Mammary epithelial cell (primary cell): ENCODE measurements at regions of chr11 and their contacts with region 1.

Region 1: DNA sequence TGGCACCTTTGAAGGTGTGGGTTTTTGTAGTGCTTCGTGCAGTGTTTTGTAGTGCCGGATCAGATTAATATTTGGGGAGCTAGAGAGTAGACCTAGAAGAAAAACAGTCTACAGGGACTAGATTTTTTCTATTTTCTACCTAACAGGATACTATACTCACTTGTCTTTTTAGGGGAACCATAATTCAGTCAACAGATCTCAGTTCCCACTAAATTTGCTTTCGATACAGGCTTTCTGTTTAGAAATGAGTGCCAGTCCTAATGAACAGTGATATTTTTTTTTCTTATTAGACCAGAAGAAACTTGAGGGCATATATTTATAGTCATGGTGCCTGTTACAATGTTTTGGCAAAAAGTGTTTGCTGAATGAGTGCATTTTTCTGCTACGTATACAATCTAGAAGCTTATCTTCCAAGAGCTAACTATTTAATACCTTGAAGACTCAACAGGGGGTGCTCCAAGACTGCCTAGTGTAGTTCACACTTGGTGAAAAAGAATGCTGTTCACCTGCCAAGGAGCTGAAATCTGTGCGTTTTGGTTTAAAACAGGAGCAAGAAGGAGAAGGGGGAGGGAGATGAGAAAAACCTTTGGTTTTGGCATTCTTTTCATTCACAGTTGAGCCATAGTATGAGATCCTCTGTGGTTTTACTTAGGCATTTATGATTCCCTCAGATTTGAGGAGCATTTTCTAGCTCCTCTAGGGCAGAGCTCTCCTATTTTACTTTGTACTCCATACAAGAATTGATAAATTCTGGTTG is 44.9 kb upstream of the VSTM5 start:
- DNase-seq: peak; percentile 48
- H3K4me3 ChIP-seq: peak overlapping the region in 1 of 3 experiments; percentile 4
- H3K27ac ChIP-seq: no peak overlapping the region
- H3K4me1 ChIP-seq: no peaks in the 10 kb centered on the region
- H3K27me3 ChIP-seq: no peaks in the 10 kb centered on the region
- CTCF ChIP-seq: peak; percentile 88 to 89

Region 2: DNA sequence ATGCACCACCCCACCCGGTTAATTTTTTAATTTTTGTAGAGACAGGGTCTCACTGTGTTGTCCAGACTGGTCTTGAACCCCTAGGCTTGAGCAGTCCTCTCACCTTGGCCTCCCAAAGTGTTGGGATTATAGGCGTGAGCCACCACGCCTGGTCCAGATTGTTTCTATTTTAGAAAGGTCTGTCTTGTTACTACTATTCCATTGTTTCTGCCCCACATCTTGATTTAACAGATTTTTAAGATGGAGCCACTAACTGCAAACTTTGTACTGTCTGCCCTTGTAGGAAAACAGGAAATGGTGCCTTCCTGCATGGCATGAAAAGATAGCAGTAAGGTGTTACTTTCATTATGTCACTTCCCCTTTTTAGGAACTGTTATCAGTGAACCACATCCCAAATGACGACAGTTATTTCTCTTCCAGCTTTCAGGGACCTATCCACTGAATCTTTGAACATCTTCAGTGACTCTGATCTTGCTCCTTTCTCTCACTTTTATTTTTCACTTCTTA is 177.2 kb before region 1 on chr11:
- CTCF ChIA-PET with region 1: no interaction called
- dilution Hi-C with region 1: no loop called
- in situ Hi-C with region 1: no loop called
- intact Hi-C with region 1: no loop called
- DNase-seq: no peak
- H3K4me3 ChIP-seq: no peak overlapping the region
- H3K27ac ChIP-seq: no peak overlapping the region
- H3K4me1 ChIP-seq: no peaks in the 10 kb centered on the region
- H3K27me3 ChIP-seq: no peaks in the 10 kb centered on the region
- CTCF ChIP-seq: no peak

Region 3: DNA sequence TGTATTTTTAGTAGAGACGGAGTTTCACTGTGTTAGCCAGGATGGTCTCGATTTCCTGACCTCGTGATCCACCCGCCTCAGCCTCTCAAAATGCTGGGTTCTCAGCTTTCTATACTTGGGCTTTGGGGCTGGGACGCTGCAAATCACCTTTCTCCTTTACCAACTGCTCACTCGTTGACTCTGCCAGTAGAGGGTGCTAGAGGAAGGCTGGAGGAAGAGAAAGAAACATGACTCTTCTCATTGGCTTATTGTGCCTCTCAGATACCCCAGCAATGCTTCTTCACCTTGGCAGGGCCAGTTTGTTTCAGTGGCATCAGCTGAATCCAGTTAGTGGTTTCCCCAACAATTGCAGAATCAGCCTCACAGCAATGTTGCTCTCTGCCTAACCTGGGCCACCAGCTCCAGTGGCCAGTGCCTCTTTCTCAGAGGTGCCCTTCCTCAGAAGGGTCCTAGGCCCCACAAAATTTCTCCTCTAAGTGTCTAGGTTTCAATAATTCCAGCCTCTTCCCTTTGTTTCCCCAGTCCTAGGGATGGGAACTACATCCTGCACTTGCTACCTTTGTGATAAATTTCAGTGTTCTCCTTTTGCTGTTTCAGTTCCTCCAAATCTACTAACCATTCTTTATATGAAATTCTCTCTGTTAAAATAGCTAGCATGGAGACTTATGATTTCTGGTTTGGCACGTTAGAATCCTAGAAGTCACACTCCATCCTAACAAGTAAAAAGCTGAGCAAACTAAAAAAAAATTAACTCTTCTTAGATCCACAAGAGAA is 26.6 kb after region 1 on chr11:
- CTCF ChIA-PET with region 1: interaction called, 8 read pairs
- dilution Hi-C with region 1: no loop called
- in situ Hi-C with region 1: no loop called
- intact Hi-C with region 1: loop called (anchors 1 kb)
- DNase-seq: peak; percentile 68
- H3K4me3 ChIP-seq: no peak overlapping the region
- H3K27ac ChIP-seq: no peak overlapping the region
- H3K4me1 ChIP-seq: peaks cover 7% of the 10 kb centered on the region
- H3K27me3 ChIP-seq: no peaks in the 10 kb centered on the region
- CTCF ChIP-seq: peak; percentile 89 to 96

Region 4: GRCh38 chr11:94325681-94326080 is 430.4 kb after region 1 on chr11:
- CTCF ChIA-PET with region 1: no interaction called
- dilution Hi-C with region 1: no loop called
- in situ Hi-C with region 1: no loop called
- intact Hi-C with region 1: loop called (anchors 5 kb)
- DNase-seq: peak; percentile 30
- H3K4me3 ChIP-seq: no peak overlapping the region
- H3K27ac ChIP-seq: no peak overlapping the region
- H3K4me1 ChIP-seq: no peaks in the 10 kb centered on the region
- H3K27me3 ChIP-seq: no peaks in the 10 kb centered on the region
- CTCF ChIP-seq: peak; percentile 65 to 69

Region 5: DNA sequence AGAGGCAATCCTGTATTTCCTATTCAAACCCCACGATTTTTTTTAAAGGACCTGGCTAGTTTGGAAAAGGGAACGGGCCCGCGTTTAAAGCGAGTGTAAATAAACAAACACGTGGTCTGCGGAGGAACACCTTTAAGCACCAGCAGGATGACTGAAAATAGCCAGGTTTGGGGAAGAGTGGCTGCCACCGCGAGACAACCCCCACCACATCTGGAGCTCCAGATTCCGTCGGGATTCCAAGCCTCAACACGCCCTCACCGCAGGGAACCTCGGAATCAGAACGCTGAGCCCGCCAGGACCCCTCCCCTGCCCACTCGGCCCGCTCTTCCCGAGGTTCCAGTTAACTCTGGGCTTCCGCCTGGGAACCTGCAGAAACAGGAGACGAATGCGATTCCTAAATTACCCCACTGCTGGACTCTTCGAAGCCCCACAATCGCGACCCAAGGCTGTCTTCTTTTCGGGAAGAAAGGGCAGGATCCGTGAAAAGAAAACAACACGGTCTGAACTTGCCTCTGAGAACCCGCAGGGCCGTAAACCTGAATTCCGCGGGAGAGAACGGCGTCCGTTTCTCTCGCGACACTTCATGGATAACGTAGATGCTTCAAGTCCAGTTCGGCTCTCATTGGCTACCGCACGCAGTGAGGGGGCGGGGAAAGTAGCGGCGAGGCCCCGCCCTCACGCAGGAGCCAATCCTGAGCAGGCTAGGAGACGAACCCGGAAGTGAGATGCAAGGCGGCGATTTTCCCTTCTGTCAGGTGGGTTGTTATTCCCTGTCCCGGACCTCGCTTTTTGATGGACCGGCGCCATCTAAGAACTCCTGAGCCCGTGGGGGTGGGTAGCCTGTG is 598.2 kb after region 1 on chr11 and contains the starts of genes ANKRD49 and MRE11:
- CTCF ChIA-PET with region 1: no interaction called
- dilution Hi-C with region 1: no loop called
- in situ Hi-C with region 1: loop called (anchors 10 kb)
- intact Hi-C with region 1: no loop called
- DNase-seq: peak; percentile 98
- H3K4me3 ChIP-seq: peak within 1 kb of the TSS; percentile 80 to 96 (median 95)
- H3K27ac ChIP-seq: peak within 1 kb of the TSS; percentile 95
- H3K4me1 ChIP-seq: peaks cover 13% of the 10 kb centered on the region
- H3K27me3 ChIP-seq: no peaks in the 10 kb centered on the region
- CTCF ChIP-seq: no peak
- total RNA-seq, gene ANKRD49: 9.4 to 13.8 TPM
- total RNA-seq, gene MRE11: 10.3 to 19.5 TPM

Region 6: GRCh38 chr11:94602430-94603372 is 707.4 kb after region 1 on chr11:
- CTCF ChIA-PET with region 1: interaction called, 4 read pairs
- dilution Hi-C with region 1: no loop called
- in situ Hi-C with region 1: no loop called
- intact Hi-C with region 1: loop called (anchors 5 kb)
- DNase-seq: peak; percentile 68
- H3K4me3 ChIP-seq: no peak overlapping the region
- H3K27ac ChIP-seq: no peak overlapping the region
- H3K4me1 ChIP-seq: no peaks in the 10 kb centered on the region
- H3K27me3 ChIP-seq: no peaks in the 10 kb centered on the region
- CTCF ChIP-seq: peak; percentile 46 to 53